Esophagus muscularis mucosa (tissue), 4 donors: ENCODE measurements at regions of chr2 and their contacts with region 1.

Region 1: DNA sequence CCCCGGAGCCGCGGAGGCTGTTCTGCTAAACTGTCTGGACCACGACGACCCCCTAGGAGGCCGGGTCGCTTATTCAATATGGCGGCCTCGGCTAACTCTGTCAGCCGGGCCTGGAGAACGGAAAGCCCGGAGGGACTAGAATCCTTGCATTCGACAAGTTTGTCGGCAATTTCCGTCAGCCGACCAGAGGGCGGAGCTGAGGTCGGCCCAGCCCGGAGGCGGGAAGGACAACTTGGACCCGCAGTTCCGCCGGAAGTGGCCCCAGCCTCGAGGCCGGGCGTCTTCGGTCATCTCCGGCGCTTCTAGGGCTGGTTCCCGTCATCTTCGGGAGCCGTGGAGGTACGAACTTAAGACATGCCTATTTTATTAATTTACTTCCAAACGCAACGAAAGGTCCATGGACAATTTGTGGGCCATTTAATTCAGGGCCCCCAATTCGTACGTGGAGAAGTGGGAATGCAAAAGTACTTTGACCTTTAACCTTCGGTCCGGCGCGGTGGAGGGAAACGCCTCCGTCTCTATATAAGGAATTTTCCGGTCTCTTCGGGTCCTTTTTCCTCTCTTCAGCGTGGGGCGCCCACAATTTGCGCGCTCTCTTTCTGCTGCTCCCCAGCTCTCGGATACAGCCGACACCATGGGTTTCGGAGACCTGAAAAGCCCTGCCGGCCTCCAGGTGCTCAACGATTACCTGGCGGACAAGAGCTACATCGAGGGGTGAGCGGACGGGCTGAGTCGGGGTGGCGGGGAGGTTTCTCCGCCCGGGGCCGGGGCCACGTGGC is at the starts of genes EEF1B2 and NDUFS1:
- DNase-seq: peak; percentile 99
- H3K4me3 ChIP-seq: peak within 1 kb of the TSS; percentile 75 to 84 (median 76)
- H3K27ac ChIP-seq: peak within 1 kb of the TSS; percentile 87 to 94 (median 91)
- H3K4me1 ChIP-seq: peaks cover 27 to 51% (median 48%) of the 10 kb centered on the region in 4 donors
- H3K27me3 ChIP-seq: no peaks in the 10 kb centered on the region
- CTCF ChIP-seq: peak in 1 of 3 experiments; percentile 10
- EP300 ChIP-seq: no peak
- POLR2A ChIP-seq: peak; percentile 11
- total RNA-seq, gene EEF1B2: 219 to 381 (median 342) TPM
- total RNA-seq, gene NDUFS1: 83.5 to 101 (median 90.9) TPM

Region 2: DNA sequence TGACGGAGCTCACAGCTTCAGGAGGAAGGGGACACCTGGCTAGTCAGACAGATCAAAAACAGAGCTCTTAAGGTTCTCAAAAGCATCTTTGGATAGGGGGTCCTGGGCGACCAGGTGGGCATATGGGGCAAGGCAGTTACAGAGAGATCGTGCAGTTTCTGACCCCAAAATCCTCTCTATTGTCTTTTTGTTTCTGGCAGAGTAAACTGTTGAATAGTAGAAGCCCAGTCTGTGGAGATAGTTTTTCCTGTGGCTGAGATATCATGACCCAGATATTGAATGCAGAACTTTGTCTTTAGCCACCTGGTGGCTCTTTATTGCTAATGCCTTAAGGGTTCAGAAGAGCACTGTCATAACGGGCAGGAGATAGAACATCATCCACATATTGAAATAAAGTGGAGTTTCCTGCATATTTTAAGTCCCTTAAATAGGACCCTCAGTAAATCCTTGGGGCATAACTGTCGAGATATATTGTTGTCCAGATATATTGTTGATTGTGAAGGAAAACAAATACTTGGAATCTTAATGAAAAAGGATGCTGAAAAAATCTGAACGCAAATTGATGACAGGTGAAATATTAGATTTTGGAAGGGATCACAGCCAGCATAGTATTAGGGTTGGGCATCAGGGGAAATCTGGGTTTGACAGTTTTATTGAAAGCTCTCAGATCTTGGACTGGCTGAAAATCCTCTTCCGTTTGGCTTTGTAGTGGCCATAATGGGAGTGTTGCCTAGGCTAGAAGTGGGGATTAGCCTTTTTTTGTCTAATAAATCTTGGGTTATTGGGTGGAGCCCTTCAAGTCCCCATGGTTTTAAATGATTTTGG is 100.9 kb after region 1 on chr2:
- intact Hi-C with region 1: loop called (anchors 10 kb)
- DNase-seq: peak; percentile 75
- H3K4me3 ChIP-seq: no peak overlapping the region
- H3K27ac ChIP-seq: no peak overlapping the region
- H3K4me1 ChIP-seq: no peaks in the 10 kb centered on the region
- H3K27me3 ChIP-seq: peaks cover 0 to 100% (median 46%) of the 10 kb centered on the region in 4 donors
- CTCF ChIP-seq: peak; percentile 20 to 38 (median 25)
- EP300 ChIP-seq: no peak
- POLR2A ChIP-seq: no peak

Region 3: GRCh38 chr2:206556357-206556949 is 396.9 kb after region 1 on chr2:
- intact Hi-C with region 1: loop called (anchors 10 kb)
- DNase-seq: no peak
- H3K4me3 ChIP-seq: no peak overlapping the region
- H3K27ac ChIP-seq: no peak overlapping the region
- H3K4me1 ChIP-seq: peaks cover 0 to 21% (median 4%) of the 10 kb centered on the region in 4 donors
- H3K27me3 ChIP-seq: no peaks in the 10 kb centered on the region
- CTCF ChIP-seq: peak in 1 of 3 experiments; percentile 50
- EP300 ChIP-seq: no peak
- POLR2A ChIP-seq: no peak